Dorsolateral prefrontal cortex (tissue), 120 donors: ENCODE measurements at regions of chr7 and their contacts with region 1.

Region 1: GRCh38 chr7:76997381-76997780 is 34.8 kb downstream of the SPDYE17 start:
- DNase-seq: no peak
- H3K4me3 ChIP-seq: no peak overlapping the region
- H3K27ac ChIP-seq: no peak overlapping the region
- H3K27me3 ChIP-seq: no peaks in the 10 kb centered on the region
- CTCF ChIP-seq: no peak

Region 2: DNA sequence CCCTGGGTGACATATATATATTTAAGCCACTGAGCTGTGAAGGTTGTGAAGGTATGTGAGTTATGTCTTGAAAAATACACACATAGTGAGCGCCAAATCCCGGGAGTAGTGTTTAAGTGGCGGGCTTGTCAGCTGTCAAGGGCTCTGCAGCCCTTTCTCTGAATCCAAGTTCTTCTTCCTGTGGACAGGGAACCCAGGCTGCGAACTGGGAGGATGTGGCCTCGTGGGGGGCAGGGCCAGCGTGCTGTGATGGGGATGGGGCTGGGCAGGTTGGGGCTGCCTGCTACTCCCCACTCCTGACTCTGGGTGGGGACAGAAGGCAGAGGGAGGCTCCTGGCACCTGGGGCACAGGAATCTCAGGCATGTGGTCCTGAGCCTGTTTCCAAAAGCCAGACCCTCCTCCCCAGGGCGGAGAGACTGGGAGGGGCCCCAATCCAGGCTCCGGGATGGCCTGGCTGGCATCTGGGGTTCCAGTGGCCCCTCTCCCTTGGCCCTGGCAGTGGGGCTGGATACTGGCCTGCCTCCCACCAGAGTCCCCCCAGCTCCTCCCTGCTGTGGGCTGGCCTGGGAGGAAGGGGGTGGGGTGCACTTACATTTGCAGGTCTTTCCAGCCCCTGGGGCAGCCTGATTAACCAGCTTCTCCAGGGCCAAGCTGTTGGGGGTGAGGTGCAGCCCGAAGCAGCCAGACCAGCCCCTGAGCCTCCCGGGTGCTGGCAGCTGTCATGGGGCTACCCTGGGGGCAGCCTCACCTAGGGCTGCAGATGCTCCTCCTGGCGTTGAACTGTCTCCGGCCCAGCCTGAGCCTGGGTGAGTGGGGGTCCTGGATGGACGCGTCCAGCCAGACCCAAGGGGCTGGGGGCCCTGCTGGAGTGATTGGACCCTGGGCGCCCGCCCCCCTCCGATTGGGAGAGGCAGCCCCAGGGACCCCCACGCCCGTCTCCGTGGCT is 487.2 kb before region 1 on chr7 and contains the start of gene UPK3B:
- intact Hi-C with region 1: loop called (anchors 5 to 10 kb)
- DNase-seq: no peak
- H3K4me3 ChIP-seq: no peak within 1 kb of the TSS
- H3K27ac ChIP-seq: no peak within 1 kb of the TSS
- H3K27me3 ChIP-seq: no peaks in the 10 kb centered on the region
- CTCF ChIP-seq: no peak
- total RNA-seq, gene UPK3B: 0.50 to 8.0 (median 2.4) TPM in 119 of 120 experiments, not detected in the other